Naive thymus-derived CD4-positive, alpha-beta T cell (primary cell): ENCODE measurements at regions of chr5 and their contacts with region 1.

Region 1: GRCh38 chr5:115169487-115170133 is at the start of gene TRIM36:
- DNase-seq: peak; percentile 70 to 97 (median 81)
- ATAC-seq: peak; percentile 98
- H3K4me3 ChIP-seq: peak within 1 kb of the TSS; percentile 70
- H3K4me3 Mint-ChIP-seq: peak within 1 kb of the TSS; percentile 71 to 89 (median 84)
- H3K27ac ChIP-seq: no peak within 1 kb of the TSS
- H3K27ac Mint-ChIP-seq: peak within 1 kb of the TSS in 2 of 9 donors; percentile 53 to 81
- H3K4me1 ChIP-seq: peaks cover 9 to 11% of the 10 kb centered on the region in 2 donors
- H3K4me1 Mint-ChIP-seq: peaks cover 6 to 17% (median 12%) of the 10 kb centered on the region in 7 donors
- H3K27me3 ChIP-seq: peaks cover 17 to 38% of the 10 kb centered on the region in 2 donors
- H3K27me3 Mint-ChIP-seq: peaks cover 61 to 77% (median 68%) of the 10 kb centered on the region in 5 donors
- total RNA-seq, gene TRIM36: 0.12 to 2.6 (median 0.32) TPM in 4 of 5 experiments, not detected in the other

Region 2: GRCh38 chr5:115209279-115209678 is 39.7 kb after region 1 on chr5:
- CTCF ChIA-PET with region 1: no interaction called
- POLR2A ChIA-PET with region 1: no interaction called
- intact Hi-C with region 1: loop called in 1 of 2 experiments (anchors 1 kb)
- DNase-seq: peak in 8 of 9 donors; percentile 1 to 45 (median 15)
- ATAC-seq: peak; percentile 97
- H3K4me3 ChIP-seq: no peak overlapping the region
- H3K4me3 Mint-ChIP-seq: peak overlapping the region in 1 of 10 donors; percentile 77
- H3K27ac ChIP-seq: no peak overlapping the region
- H3K27ac Mint-ChIP-seq: peak overlapping the region in 3 of 9 donors; percentile 6 to 74 (median 62)
- H3K4me1 ChIP-seq: no peaks in the 10 kb centered on the region
- H3K4me1 Mint-ChIP-seq: peaks cover 5 to 19% (median 12%) of the 10 kb centered on the region in 7 donors
- H3K27me3 ChIP-seq: no peaks in the 10 kb centered on the region
- H3K27me3 Mint-ChIP-seq: no peaks in the 10 kb centered on the region

Region 3: DNA sequence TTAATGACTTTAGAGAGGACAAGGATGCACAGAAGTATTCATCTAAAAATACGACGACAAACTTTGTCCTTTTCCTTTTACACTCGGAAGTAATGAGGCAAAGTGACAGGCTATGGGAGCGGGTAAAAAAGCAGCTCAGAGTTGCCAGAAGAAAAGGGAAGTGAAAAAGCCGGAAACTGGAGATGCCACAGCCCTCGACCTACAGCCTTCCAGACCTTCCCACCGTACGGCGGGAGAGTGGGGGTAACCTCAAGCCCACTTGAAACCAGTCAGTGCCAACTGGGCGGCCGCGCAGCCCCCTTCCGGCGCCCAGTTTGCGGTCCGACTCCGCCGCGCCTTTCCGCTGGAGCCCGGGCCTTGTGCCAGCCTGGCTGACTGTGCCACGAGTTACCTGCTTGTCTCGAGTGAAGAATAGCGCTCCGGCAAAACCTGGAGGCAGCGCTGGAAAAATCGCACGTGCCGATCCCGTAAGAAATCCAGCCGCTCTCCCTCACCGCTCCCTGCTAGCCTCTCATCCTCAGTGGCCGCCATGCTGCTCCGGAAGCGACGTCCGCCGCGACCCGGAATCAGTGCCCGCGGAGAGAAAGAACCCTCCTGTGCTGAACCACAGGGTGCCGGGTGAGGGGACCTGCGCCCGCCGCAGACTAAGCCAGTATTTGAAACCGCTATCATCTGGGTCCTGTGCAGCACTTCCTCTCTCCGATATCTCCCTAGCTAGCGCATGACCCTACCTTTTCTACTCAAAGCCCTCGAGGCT is 92.9 kb after region 1 on chr5 and contains the start of gene PGGT1B:
- CTCF ChIA-PET with region 1: no interaction called
- POLR2A ChIA-PET with region 1: no interaction called
- intact Hi-C with region 1: loop called in 1 of 2 experiments (anchors 2 kb)
- DNase-seq: peak; percentile 45 to 69 (median 64)
- ATAC-seq: peak; percentile 94
- H3K4me3 ChIP-seq: peak within 1 kb of the TSS; percentile 94
- H3K4me3 Mint-ChIP-seq: peak within 1 kb of the TSS; percentile 91 to 100 (median 96)
- H3K27ac ChIP-seq: peak within 1 kb of the TSS; percentile 76
- H3K27ac Mint-ChIP-seq: peak within 1 kb of the TSS; percentile 83 to 96 (median 94)
- H3K4me1 ChIP-seq: peaks cover 15 to 23% of the 10 kb centered on the region in 2 donors
- H3K4me1 Mint-ChIP-seq: peaks cover 33 to 59% (median 43%) of the 10 kb centered on the region in 7 donors
- H3K27me3 ChIP-seq: no peaks in the 10 kb centered on the region
- H3K27me3 Mint-ChIP-seq: peaks cover 0 to 4% (median 0%) of the 10 kb centered on the region in 5 donors
- total RNA-seq, gene PGGT1B: 34.5 to 49.1 (median 41.5) TPM

Region 4: DNA sequence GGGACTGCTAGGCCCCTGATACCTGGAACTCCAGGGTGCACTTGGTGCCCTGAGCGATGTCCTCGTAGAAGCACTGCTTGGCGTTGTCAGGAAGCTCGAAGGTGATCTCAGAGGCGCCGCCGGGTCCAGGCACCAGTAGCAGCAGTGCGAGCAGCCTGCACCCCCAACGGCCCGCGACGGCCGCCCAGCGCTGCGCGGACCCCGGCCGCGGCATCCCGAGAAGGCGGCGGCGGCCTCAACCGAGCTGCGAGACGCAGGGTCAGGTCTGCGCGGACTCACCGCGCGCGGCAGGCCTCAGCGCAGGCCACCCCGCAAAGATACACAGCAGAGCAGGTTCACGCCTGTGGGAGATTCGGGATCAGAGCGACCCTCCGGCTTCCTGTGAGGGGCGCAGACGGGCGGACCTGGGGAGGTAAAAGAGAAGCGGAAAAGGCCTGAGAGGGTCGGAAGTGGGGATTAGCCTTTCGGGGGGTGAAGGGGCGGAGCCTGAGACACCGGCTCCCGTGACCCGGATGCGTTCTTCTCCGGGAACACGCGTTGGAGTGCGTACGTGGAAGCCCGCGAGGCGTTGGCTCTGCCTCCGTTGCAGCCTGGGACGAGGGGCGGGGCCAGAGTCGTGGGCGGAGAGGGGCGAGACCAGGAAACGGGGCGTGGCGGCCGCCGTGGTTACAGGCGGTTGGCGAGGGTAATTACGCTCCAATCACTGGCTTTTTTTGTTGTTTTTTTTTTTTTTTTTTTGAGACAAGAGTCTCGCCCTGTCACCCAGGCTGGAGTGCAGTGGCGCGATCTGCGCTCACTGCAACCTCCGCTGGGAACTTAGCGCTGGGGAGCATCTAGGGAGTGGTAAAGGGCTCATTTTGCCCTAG is 456.2 kb after region 1 on chr5 and contains the start of gene TMED7:
- CTCF ChIA-PET with region 1: no interaction called
- POLR2A ChIA-PET with region 1: no interaction called
- intact Hi-C with region 1: loop called (anchors 1 to 5 kb)
- DNase-seq: peak; percentile 98 to 100 (median 99)
- ATAC-seq: peak; percentile 97
- H3K4me3 ChIP-seq: peak within 1 kb of the TSS; percentile 93
- H3K4me3 Mint-ChIP-seq: no peak within 1 kb of the TSS
- H3K27ac ChIP-seq: peak within 1 kb of the TSS; percentile 96
- H3K27ac Mint-ChIP-seq: peak within 1 kb of the TSS in 5 of 9 donors; percentile 93 to 98 (median 98)
- H3K4me1 ChIP-seq: peaks cover 20 to 35% of the 10 kb centered on the region in 2 donors
- H3K4me1 Mint-ChIP-seq: peaks cover 11 to 37% (median 27%) of the 10 kb centered on the region in 7 donors
- H3K27me3 ChIP-seq: no peaks in the 10 kb centered on the region
- H3K27me3 Mint-ChIP-seq: peaks cover 0 to 6% (median 0%) of the 10 kb centered on the region in 5 donors
- total RNA-seq, gene TMED7: 41.7 to 58.0 (median 47.5) TPM

Region 5: GRCh38 chr5:116420540-116420939 is 1250.9 kb after region 1 on chr5:
- CTCF ChIA-PET with region 1: no interaction called
- POLR2A ChIA-PET with region 1: no interaction called
- intact Hi-C with region 1: no loop called
- DNase-seq: no peak
- ATAC-seq: no peak
- H3K4me3 ChIP-seq: no peak overlapping the region
- H3K4me3 Mint-ChIP-seq: no peak overlapping the region
- H3K27ac ChIP-seq: no peak overlapping the region
- H3K27ac Mint-ChIP-seq: no peak overlapping the region
- H3K4me1 ChIP-seq: no peaks in the 10 kb centered on the region
- H3K4me1 Mint-ChIP-seq: peaks cover 0 to 2% (median 0%) of the 10 kb centered on the region in 7 donors
- H3K27me3 ChIP-seq: no peaks in the 10 kb centered on the region
- H3K27me3 Mint-ChIP-seq: no peaks in the 10 kb centered on the region